Uterus (tissue), 4 donors: ENCODE measurements at regions of chr1 and their contacts with region 1.

Region 1: GRCh38 chr1:179809506-179810366 is 66.6 kb downstream of the FAM163A start:
- DNase-seq: peak; percentile 45 to 49
- H3K4me3 ChIP-seq: no peak overlapping the region
- H3K27ac ChIP-seq: no peak overlapping the region
- H3K4me1 ChIP-seq: no peaks in the 10 kb centered on the region
- H3K27me3 ChIP-seq: no peaks in the 10 kb centered on the region
- CTCF ChIP-seq: peak; percentile 80 to 86 (median 82)
- POLR2A ChIP-seq: no peak

Region 2: GRCh38 chr1:179706339-179706941 is 103.3 kb before region 1 on chr1:
- intact Hi-C with region 1: loop called (anchors 5 kb)
- DNase-seq: peak; percentile 31 to 36
- H3K4me3 ChIP-seq: no peak overlapping the region
- H3K27ac ChIP-seq: no peak overlapping the region
- H3K4me1 ChIP-seq: no peaks in the 10 kb centered on the region
- H3K27me3 ChIP-seq: no peaks in the 10 kb centered on the region
- CTCF ChIP-seq: peak; percentile 47 to 75 (median 63)
- POLR2A ChIP-seq: no peak

Region 3: GRCh38 chr1:180301135-180301742 is 491.5 kb after region 1 on chr1:
- intact Hi-C with region 1: no loop called
- DNase-seq: no peak
- H3K4me3 ChIP-seq: no peak overlapping the region
- H3K27ac ChIP-seq: no peak overlapping the region
- H3K4me1 ChIP-seq: no peaks in the 10 kb centered on the region
- H3K27me3 ChIP-seq: no peaks in the 10 kb centered on the region
- CTCF ChIP-seq: no peak
- POLR2A ChIP-seq: no peak